ENCODE measurements at regions of chr3 and their contacts with region 1.

Region 1: DNA sequence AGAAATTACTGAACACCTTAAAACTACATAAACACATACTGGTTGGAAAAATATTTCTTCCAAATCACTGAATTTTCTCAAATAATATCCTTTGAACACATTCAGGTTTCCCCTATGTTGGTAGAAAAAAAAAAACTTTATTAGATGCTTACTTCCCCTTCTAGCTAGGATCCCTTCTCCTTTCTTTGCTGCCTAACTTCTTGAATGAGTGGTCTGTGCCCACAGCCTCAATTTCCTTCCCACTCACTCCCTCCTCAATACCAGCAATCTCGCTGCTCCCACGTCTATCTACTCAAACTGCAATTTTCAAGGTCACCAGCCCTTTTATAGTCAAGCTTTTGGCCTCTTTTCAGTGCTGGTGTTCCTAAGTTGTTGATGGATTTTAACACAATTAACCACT is 8.3 kb downstream of the CD200R1 start:
- DNase-seq: peak; percentile 46 to 76 (median 72)
- H3K4me3 ChIP-seq: peak overlapping the region in 1 of 3 experiments; percentile 47
- H3K4me3 Mint-ChIP-seq: peak overlapping the region; percentile 1 to 72
- H3K27ac ChIP-seq: peak overlapping the region in 1 of 2 donors; percentile 83
- H3K27ac Mint-ChIP-seq: peak overlapping the region; percentile 83 to 96 (median 93)
- H3K4me1 ChIP-seq: peaks cover 41 to 49% of the 10 kb centered on the region in 2 donors
- H3K4me1 Mint-ChIP-seq: peaks cover 50% of the 10 kb centered on the region
- H3K27me3 ChIP-seq: no peaks in the 10 kb centered on the region
- H3K27me3 Mint-ChIP-seq: peaks cover 0 to 1% (median 0%) of the 10 kb centered on the region in 3 donors
- CTCF ChIP-seq: no peak

Region 2: GRCh38 chr3:112873632-112874031 is 93.0 kb before region 1 on chr3:
- intact Hi-C with region 1: loop called in 1 of 2 experiments (anchors 10 kb)
- DNase-seq: peak; percentile 27 to 76 (median 44)
- H3K4me3 ChIP-seq: peak overlapping the region in 1 of 3 experiments; percentile 25
- H3K4me3 Mint-ChIP-seq: peak overlapping the region in 1 of 2 donors; percentile 74
- H3K27ac ChIP-seq: peak overlapping the region in 1 of 2 donors; percentile 57
- H3K27ac Mint-ChIP-seq: peak overlapping the region; percentile 65 to 86 (median 76)
- H3K4me1 ChIP-seq: peaks cover 25 to 47% of the 10 kb centered on the region in 2 donors
- H3K4me1 Mint-ChIP-seq: peaks cover 39% of the 10 kb centered on the region
- H3K27me3 ChIP-seq: no peaks in the 10 kb centered on the region
- H3K27me3 Mint-ChIP-seq: peaks cover 0 to 1% (median 0%) of the 10 kb centered on the region in 3 donors
- CTCF ChIP-seq: no peak